ENCODE measurements at regions of chr12 and their contacts with region 1.

Region 1: GRCh38 chr12:50111693-50112455 is at the start of gene COX14:
- DNase-seq: peak; percentile 100
- H3K4me3 Mint-ChIP-seq: peak within 1 kb of the TSS; percentile 89
- H3K27ac Mint-ChIP-seq: peak within 1 kb of the TSS; percentile 91
- H3K4me1 Mint-ChIP-seq: peaks cover 36% of the 10 kb centered on the region
- H3K27me3 Mint-ChIP-seq: no peaks in the 10 kb centered on the region
- total RNA-seq, gene COX14: 47.5 to 48.3 TPM

Region 2: DNA sequence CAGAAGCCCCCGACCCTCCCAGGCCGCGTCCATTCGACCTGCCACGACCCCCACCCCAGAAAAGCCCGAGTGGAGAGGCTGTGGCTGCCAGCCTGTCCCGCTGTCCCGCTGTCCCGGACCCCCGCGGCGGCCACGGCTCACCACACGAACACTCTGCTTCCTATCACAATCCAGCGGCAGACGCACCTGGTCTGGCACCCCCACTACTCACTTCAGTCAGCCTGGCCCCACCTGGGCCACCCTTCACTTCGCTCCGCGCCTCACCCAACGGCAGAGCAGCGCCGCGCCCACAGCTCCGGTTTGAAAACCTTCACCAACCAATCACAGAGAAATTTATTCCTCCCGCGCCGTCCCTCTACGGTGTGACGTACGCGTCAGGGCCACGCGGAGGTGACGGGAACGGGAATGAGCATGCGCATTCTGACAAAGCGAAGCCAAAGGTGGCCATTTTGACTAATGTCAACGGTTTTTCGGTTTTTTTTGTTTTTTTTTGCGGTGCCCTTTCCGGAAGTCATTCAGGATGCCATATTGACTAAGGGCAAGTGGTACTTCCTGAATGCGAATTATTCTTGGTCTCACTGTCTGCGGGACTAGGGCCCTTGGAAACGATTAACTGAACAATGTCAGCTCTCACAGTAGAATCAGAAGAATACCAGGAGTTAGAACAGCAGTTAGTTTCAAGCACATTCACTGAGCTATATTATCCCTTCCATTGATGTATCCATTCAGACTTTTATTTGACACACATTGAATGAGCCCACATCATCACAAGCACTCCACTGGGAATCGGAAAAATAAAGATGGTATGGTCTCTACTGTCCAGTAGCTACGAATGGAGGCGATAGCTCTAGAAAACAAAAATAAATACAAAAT is 86.5 kb before region 1 on chr12 and contains the start of gene RACGAP1:
- CTCF ChIA-PET with region 1: interaction called, 9 read pairs
- intact Hi-C with region 1: loop called (anchors 1 kb)
- DNase-seq: peak; percentile 98
- H3K4me3 Mint-ChIP-seq: peak within 1 kb of the TSS; percentile 92
- H3K27ac Mint-ChIP-seq: peak within 1 kb of the TSS; percentile 94
- H3K4me1 Mint-ChIP-seq: peaks cover 12% of the 10 kb centered on the region
- H3K27me3 Mint-ChIP-seq: no peaks in the 10 kb centered on the region
- total RNA-seq, gene RACGAP1: 156 to 159 TPM

Region 3: DNA sequence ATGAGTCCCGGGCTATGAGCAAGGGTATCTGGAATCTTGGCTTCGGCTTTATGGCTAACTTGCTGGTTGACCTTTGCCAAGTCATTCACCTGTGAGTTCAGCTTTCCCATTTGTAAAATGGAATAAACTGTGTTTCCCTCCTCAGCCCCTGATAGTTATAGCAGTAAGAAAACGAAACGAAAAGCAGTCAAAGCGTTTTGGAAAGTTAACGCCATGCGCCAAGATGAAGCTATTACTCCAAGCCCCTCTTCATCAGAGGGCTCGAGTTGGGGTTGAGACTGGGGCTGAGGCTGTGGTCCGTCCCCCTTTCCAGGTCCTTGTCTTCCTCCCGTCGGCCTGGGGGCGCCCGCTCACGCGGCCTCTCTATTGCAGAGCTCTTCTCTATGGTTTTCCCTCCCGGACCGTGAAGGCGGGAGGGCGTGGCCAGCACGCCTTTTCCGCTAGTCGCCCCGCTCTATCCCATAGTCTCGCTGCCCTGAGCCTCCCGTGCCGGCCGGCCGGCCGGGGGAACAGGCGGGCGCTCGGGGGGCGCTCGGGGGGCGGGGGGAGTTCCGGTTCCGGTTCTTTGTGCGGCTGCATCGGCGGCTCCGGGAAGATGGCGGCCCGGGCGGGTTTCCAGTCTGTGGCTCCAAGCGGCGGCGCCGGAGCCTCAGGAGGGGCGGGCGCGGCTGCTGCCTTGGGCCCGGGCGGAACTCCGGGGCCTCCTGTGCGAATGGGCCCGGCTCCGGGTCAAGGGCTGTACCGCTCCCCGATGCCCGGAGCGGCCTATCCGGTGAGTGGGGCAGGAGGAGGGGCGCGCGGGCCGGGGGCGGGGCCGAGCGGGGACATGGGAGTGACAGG is 26.9 kb before region 1 on chr12 and contains the start of gene SMARCD1:
- CTCF ChIA-PET with region 1: interaction called, 60 read pairs
- intact Hi-C with region 1: loop called (anchors 1 kb)
- DNase-seq: peak; percentile 88
- H3K4me3 Mint-ChIP-seq: peak within 1 kb of the TSS; percentile 89
- H3K27ac Mint-ChIP-seq: peak within 1 kb of the TSS; percentile 93
- H3K4me1 Mint-ChIP-seq: peaks cover 42% of the 10 kb centered on the region
- H3K27me3 Mint-ChIP-seq: no peaks in the 10 kb centered on the region
- total RNA-seq, gene SMARCD1: 57.7 to 60.2 TPM

Region 4: GRCh38 chr12:50132505-50133135 is 20.7 kb after region 1 on chr12:
- CTCF ChIA-PET with region 1: interaction called, 59 read pairs
- intact Hi-C with region 1: loop called (anchors 1 kb)
- DNase-seq: no peak
- H3K4me3 Mint-ChIP-seq: no peak overlapping the region
- H3K27ac Mint-ChIP-seq: peak overlapping the region; percentile 81
- H3K4me1 Mint-ChIP-seq: peaks cover 8% of the 10 kb centered on the region
- H3K27me3 Mint-ChIP-seq: no peaks in the 10 kb centered on the region

Region 5: DNA sequence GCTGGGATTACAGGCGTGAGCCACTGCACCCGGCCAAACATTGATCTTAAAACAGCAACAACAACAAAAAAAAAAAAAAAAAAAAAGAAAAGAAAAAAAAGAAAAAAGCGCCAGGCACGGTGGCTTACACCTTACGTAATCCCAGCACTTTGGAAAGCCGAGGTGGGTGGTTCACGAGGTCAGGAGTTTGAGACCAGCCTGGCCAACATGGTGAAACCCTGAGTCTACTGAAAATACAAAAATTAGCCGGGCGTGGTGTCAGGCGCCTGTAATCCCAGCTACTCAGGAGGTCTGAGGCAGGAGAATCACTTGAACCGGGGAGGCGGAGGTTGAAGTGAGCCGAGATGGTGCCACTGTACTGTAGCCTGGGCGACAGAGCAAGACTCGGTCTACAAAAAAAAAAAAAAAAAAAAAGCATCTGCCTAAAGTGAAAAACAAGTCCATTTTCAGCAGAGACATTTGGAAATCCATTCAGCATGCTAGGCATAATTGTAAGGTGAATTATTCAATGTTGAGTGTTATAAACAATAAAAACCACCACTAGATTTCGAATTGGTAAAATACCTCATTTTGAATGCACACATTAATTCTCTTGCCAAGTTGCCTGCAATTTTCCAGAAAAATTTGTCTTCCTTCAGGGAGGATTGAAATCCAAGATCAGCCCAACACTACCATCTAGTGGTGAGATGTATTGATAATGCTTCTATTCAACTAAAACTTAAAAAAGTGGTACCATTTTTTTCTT is 63.3 kb after region 1 on chr12:
- CTCF ChIA-PET with region 1: interaction called, 20 read pairs
- intact Hi-C with region 1: loop called (anchors 1 kb)
- DNase-seq: no peak
- H3K4me3 Mint-ChIP-seq: no peak overlapping the region
- H3K27ac Mint-ChIP-seq: no peak overlapping the region
- H3K4me1 Mint-ChIP-seq: no peaks in the 10 kb centered on the region
- H3K27me3 Mint-ChIP-seq: no peaks in the 10 kb centered on the region

Region 6: DNA sequence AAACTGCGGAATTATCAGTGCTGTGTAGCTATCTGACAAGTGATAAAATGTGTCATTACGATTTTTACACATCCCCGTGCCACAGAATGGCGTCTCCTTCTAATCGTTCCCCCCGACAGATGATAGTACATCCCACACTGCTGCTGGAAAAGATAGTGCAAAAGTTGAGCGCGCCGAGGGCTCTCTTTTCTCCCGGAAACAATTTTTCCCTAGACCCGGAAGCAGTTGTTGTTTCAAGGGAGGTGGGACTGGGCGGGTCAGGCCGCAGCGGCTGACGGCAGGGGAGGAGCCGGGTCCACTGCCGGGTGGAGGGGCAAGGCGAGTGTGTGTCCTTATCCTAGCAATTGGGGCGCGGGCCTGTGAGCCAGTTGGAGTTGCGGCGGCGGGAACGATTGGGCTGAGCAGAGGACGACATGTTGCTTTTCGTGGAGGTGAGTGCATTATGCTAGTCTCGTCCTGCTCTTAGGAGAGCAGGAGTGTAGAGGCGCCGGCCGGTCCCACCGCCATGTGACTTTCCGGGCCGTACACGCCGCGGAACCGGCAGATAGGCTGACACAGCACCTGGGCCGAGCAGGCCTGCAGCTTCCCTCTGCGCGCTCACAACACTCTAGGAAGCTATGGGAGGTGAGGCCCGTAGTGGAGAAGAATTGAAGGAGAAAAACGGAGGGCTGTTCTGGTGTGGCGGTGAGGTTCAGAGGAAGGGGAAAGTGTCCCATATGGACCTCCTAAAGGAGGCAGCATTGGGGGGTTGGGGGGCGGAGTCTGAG is 288.9 kb after region 1 on chr12 and contains the start of gene LARP4:
- CTCF ChIA-PET with region 1: interaction called, 3 read pairs
- intact Hi-C with region 1: loop called (anchors 1 kb)
- DNase-seq: peak; percentile 94
- H3K4me3 Mint-ChIP-seq: peak within 1 kb of the TSS; percentile 99
- H3K27ac Mint-ChIP-seq: peak within 1 kb of the TSS; percentile 87
- H3K4me1 Mint-ChIP-seq: peaks cover 19% of the 10 kb centered on the region
- H3K27me3 Mint-ChIP-seq: peaks cover 2% of the 10 kb centered on the region
- total RNA-seq, gene LARP4: 44.7 to 44.9 TPM

Measured in activated naive CD4-positive, alpha-beta T cell treated with anti-CD3 and anti-CD28 coated beads for 36 hours (primary cell).